ENCODE measurements at regions of chr20 and their contacts with region 1.

Region 1: DNA sequence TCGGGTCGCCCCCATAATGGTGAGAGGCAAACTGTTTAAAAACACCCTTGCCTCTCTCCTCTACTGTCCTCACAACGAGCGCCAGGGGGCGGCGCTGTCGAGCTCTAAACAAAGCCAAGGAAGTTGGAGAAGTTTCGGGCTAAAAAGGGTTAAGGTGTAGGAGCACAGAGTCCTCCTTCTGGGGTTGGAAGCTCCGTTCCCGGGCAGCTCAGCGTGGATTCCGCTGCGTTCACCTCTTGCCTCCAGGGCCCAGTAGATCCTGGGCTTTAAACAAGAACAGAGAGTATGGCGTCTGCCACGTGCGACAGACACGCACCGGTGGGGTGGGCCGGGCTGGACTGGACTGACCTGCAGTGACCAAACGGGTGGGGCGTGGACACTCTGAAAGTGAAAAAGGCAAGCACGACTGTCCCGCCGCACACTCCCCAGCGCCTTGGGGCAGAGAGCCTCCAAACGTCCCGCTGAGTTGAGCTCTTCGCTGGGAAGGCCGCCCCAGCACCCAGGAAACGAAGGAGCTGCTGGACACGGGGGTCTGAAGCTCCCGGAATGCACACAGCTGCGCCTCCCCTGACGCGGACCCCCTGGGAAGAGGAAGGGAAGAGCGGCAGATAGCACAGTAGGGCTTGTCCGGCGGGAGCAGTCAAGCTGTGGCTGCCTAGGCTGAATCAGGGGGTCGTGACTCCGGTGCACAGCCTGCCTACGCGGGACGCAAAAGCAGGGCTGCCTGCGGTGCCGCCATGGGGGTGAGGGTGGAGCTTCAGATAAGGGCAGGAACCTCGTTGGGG is 1.6 kb upstream of the THBD start:
- DNase-seq: peak; percentile 94
- H3K4me3 ChIP-seq: peak overlapping the region; percentile 15 to 62 (median 50)
- H3K27ac ChIP-seq: peak overlapping the region; percentile 62
- H3K4me1 ChIP-seq: peaks cover 16% of the 10 kb centered on the region
- H3K27me3 ChIP-seq: no peaks in the 10 kb centered on the region
- CTCF ChIP-seq: peak; percentile 82 to 85
- POLR2A ChIP-seq: peak; percentile 44

Region 2: DNA sequence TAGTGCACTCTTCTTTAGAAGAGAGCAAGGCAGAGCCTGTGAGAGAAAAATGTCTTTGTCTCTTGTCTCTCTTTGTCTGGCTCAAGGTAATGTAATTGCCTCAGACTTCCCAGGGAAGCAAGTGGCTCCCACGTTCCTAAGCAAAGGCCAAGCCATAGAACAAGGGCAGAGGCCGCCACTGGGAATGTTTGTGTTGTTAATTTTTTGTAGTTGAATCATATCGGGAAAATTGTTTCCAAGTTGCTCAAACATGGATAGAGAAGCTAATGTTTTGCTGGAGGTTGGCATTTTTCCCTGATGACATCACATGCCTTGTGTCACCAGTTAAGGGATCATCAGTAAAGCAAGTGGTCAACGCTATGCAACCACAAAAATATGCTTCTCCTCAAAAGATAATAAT is 255.2 kb before region 1 on chr20:
- CTCF ChIA-PET with region 1: interaction called, 3 read pairs
- POLR2A ChIA-PET with region 1: no interaction called
- dilution Hi-C with region 1: no loop called
- intact Hi-C with region 1: loop called (anchors 2 kb)
- DNase-seq: peak; percentile 98
- H3K4me3 ChIP-seq: no peak overlapping the region
- H3K27ac ChIP-seq: peak overlapping the region; percentile 100
- H3K4me1 ChIP-seq: peaks cover 43% of the 10 kb centered on the region
- H3K27me3 ChIP-seq: no peaks in the 10 kb centered on the region
- CTCF ChIP-seq: no peak
- POLR2A ChIP-seq: peak; percentile 50

Region 3: GRCh38 chr20:23086056-23086566 is 35.1 kb after region 1 on chr20 and contains the start of gene CD93:
- CTCF ChIA-PET with region 1: interaction called, 32 read pairs
- POLR2A ChIA-PET with region 1: interaction called, 12 read pairs
- dilution Hi-C with region 1: no loop called
- intact Hi-C with region 1: loop called (anchors 1 kb)
- DNase-seq: peak; percentile 95
- H3K4me3 ChIP-seq: peak within 1 kb of the TSS; percentile 30 to 93 (median 82)
- H3K27ac ChIP-seq: peak within 1 kb of the TSS; percentile 98
- H3K4me1 ChIP-seq: peaks cover 53% of the 10 kb centered on the region
- H3K27me3 ChIP-seq: no peaks in the 10 kb centered on the region
- CTCF ChIP-seq: peak in 1 of 2 donors; percentile 14
- POLR2A ChIP-seq: peak; percentile 68
- total RNA-seq, gene CD93: 346 and 413 TPM in 2 replicates

Region 4: GRCh38 chr20:23178806-23179205 is 127.8 kb after region 1 on chr20:
- CTCF ChIA-PET with region 1: interaction called, 28 read pairs
- POLR2A ChIA-PET with region 1: no interaction called
- dilution Hi-C with region 1: no loop called
- intact Hi-C with region 1: loop called (anchors 1 kb)
- DNase-seq: peak; percentile 96
- H3K4me3 ChIP-seq: no peak overlapping the region
- H3K27ac ChIP-seq: peak overlapping the region; percentile 56
- H3K4me1 ChIP-seq: peaks cover 21% of the 10 kb centered on the region
- H3K27me3 ChIP-seq: peaks cover 0 to 2% of the 10 kb centered on the region in 2 experiments
- CTCF ChIP-seq: peak; percentile 43 to 80
- POLR2A ChIP-seq: peak; percentile 49

Region 5: GRCh38 chr20:23245553-23246181 is 194.6 kb after region 1 on chr20:
- CTCF ChIA-PET with region 1: interaction called, 49 read pairs
- POLR2A ChIA-PET with region 1: no interaction called
- dilution Hi-C with region 1: no loop called
- intact Hi-C with region 1: loop called (anchors 1 kb)
- DNase-seq: peak; percentile 77
- H3K4me3 ChIP-seq: no peak overlapping the region
- H3K27ac ChIP-seq: no peak overlapping the region
- H3K4me1 ChIP-seq: no peaks in the 10 kb centered on the region
- H3K27me3 ChIP-seq: no peaks in the 10 kb centered on the region
- CTCF ChIP-seq: peak; percentile 67 to 88
- POLR2A ChIP-seq: no peak

Region 6: GRCh38 chr20:23350196-23350903 is 299.3 kb after region 1 on chr20 and contains the start of gene NXT1:
- CTCF ChIA-PET with region 1: interaction called, 152 read pairs
- POLR2A ChIA-PET with region 1: interaction called, 3 read pairs
- dilution Hi-C with region 1: no loop called
- intact Hi-C with region 1: loop called (anchors 2 kb)
- DNase-seq: peak; percentile 98
- H3K4me3 ChIP-seq: peak within 1 kb of the TSS; percentile 20 to 79 (median 77)
- H3K27ac ChIP-seq: peak within 1 kb of the TSS; percentile 94
- H3K4me1 ChIP-seq: peaks cover 19% of the 10 kb centered on the region
- H3K27me3 ChIP-seq: no peaks in the 10 kb centered on the region
- CTCF ChIP-seq: no peak
- POLR2A ChIP-seq: peak; percentile 19
- total RNA-seq, gene NXT1: 27.1 and 28.5 TPM in 2 replicates